CD4-positive, alpha-beta T cell (primary cell): ENCODE measurements at regions of chr17 and their contacts with region 1.

Region 1: GRCh38 chr17:43024407-43025289 is at the start of gene RND2:
- DNase-seq: peak; percentile 60 to 91 (median 71)
- ATAC-seq: peak; percentile 56
- H3K4me3 ChIP-seq: peak within 1 kb of the TSS; percentile 74
- H3K4me3 Mint-ChIP-seq: peak within 1 kb of the TSS; percentile 90
- H3K27ac ChIP-seq: peak within 1 kb of the TSS in 1 of 2 donors; percentile 56
- H3K27ac Mint-ChIP-seq: peak within 1 kb of the TSS; percentile 77
- H3K4me1 ChIP-seq: peaks cover 48% of the 10 kb centered on the region
- H3K4me1 Mint-ChIP-seq: peaks cover 28% of the 10 kb centered on the region
- H3K27me3 ChIP-seq: no peaks in the 10 kb centered on the region
- H3K27me3 Mint-ChIP-seq: no peaks in the 10 kb centered on the region
- CTCF ChIP-seq: peak; percentile 21
- total RNA-seq, gene RND2: 0.27 to 0.28 TPM

Region 2: DNA sequence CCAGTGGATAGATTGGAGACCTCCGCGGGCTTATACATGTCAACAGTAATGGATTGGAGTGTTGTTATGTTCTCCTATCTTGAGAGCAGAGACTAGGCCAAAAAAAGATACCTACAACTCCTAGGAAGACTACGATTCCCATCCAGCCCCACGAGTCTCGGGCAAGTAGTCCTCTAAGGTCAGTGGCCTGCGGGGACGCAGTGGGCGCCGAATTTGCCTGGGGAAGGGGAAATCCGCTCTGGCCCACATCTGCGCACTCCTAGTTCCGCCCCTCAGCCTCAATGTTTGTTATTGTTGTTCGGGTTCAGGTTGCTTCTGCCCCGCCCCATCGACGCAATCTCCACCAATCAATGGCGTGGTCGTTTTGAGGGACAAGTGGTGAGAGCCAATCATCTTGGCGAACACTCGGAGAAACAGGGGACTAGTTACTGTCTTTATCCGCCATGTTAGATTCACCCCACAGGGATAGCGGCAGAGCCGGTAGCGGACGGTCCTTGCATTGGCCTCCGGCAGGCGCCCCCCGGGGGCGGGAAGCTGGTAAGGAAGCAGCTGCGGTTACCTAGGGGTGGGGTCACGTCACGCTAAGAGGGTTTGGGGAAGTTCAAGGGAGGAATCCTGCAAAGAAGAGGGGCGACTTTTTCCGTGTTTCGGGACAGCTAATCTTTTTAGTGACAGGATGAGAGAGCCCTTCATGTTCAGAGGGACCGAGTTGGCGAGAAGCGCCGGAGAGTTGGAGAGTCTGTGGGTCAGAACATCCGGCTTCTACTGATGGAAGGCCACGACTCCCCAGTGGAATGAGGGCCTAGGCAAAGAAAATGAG is 146.3 kb after region 1 on chr17 and contains the start of gene NBR1:
- CTCF ChIA-PET with region 1: no interaction called
- POLR2A ChIA-PET with region 1: interaction called, 11 read pairs
- intact Hi-C with region 1: loop called in 1 of 2 experiments (anchors 5 kb)
- DNase-seq: peak; percentile 90 to 99 (median 92)
- ATAC-seq: peak; percentile 76
- H3K4me3 ChIP-seq: peak within 1 kb of the TSS; percentile 71
- H3K4me3 Mint-ChIP-seq: no peak within 1 kb of the TSS
- H3K27ac ChIP-seq: peak within 1 kb of the TSS; percentile 98
- H3K27ac Mint-ChIP-seq: no peak within 1 kb of the TSS
- H3K4me1 ChIP-seq: peaks cover 47% of the 10 kb centered on the region
- H3K4me1 Mint-ChIP-seq: peaks cover 27% of the 10 kb centered on the region
- H3K27me3 ChIP-seq: no peaks in the 10 kb centered on the region
- H3K27me3 Mint-ChIP-seq: no peaks in the 10 kb centered on the region
- CTCF ChIP-seq: no peak
- total RNA-seq, gene NBR1: 23.7 TPM

Region 3: GRCh38 chr17:43211480-43212402 is 187.1 kb after region 1 on chr17 and contains the start of gene TMEM106A:
- CTCF ChIA-PET with region 1: no interaction called
- POLR2A ChIA-PET with region 1: interaction called, 4 read pairs
- intact Hi-C with region 1: loop called in 1 of 2 experiments (anchors 5 kb)
- DNase-seq: peak; percentile 56 to 88 (median 68)
- ATAC-seq: peak; percentile 90
- H3K4me3 ChIP-seq: peak within 1 kb of the TSS; percentile 69
- H3K4me3 Mint-ChIP-seq: peak within 1 kb of the TSS; percentile 98
- H3K27ac ChIP-seq: peak within 1 kb of the TSS; percentile 72 to 77
- H3K27ac Mint-ChIP-seq: peak within 1 kb of the TSS; percentile 89
- H3K4me1 ChIP-seq: peaks cover 22% of the 10 kb centered on the region
- H3K4me1 Mint-ChIP-seq: peaks cover 38% of the 10 kb centered on the region
- H3K27me3 ChIP-seq: no peaks in the 10 kb centered on the region
- H3K27me3 Mint-ChIP-seq: no peaks in the 10 kb centered on the region
- CTCF ChIP-seq: peak; percentile 61
- total RNA-seq, gene TMEM106A: 6.3 to 6.4 TPM

Region 4: DNA sequence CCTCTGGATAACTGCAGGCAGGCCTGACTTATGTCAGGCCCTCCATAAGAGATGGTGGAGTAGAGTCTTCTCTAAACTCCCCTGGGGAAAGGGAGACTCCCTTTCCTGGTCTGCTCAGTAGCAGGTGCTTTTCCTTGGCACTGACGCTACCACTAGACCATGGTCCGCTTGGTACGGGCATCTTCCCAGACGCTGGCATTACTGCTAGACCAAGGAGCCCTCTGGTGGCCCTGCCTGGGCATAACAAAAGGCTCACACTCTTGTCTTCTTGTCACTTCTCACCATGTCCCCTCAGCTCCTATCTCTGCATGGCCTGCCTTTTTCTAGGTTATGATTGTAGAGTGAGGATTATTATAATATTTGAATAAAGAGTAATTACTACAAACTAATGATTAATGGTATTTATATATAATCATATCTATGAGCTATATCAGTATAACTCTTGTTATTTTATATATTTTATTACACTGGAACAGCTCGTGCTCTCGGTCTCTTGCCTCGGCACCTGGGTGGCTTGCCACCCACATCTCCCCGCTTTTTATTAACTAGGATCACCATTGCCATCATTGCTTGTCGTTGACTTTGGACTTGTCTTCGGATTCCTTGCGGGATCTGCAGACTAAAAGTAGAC is 314.4 kb after region 1 on chr17:
- CTCF ChIA-PET with region 1: no interaction called
- POLR2A ChIA-PET with region 1: interaction called, 3 read pairs
- intact Hi-C with region 1: loop called in 1 of 2 experiments (anchors 5 kb)
- DNase-seq: peak; percentile 48 to 75 (median 58)
- ATAC-seq: no peak
- H3K4me3 ChIP-seq: no peak overlapping the region
- H3K4me3 Mint-ChIP-seq: no peak overlapping the region
- H3K27ac ChIP-seq: no peak overlapping the region
- H3K27ac Mint-ChIP-seq: no peak overlapping the region
- H3K4me1 ChIP-seq: peaks cover 8% of the 10 kb centered on the region
- H3K4me1 Mint-ChIP-seq: peaks cover 8% of the 10 kb centered on the region
- H3K27me3 ChIP-seq: no peaks in the 10 kb centered on the region
- H3K27me3 Mint-ChIP-seq: no peaks in the 10 kb centered on the region
- CTCF ChIP-seq: peak; percentile 79

Region 5: DNA sequence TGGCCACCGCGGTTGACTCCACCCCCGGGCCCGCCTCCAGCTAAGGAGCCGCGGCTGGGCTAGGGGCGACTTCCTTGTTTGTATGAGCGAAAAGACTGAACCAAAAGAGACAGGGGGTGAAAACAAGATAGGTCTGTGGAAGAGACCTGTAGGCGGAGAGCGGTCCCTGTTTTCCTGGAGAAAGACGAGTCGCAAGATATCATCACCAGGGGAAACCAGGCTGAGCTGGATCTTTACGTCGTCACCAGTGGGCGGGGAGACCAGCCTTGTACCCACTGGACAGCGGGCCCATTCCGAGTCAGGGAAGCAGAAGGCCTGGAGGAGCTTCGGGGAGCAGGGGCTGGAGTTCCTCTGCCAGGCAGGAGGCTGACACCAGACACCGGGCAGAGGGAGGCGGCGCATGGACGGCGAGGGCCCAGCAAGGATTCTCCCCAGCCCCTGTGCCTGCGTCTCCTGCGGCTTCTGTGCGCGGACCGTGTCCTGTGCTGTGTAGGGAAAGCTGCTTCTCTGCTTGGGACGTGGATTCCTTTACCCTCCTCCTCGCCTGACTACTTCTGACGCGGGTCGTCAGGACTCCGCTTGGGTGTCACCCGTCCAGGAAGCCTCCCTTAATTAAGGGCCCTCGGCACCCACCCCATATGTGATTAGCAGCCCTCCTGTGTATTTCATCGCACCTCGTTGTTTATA is 363.9 kb after region 1 on chr17:
- CTCF ChIA-PET with region 1: no interaction called
- POLR2A ChIA-PET with region 1: interaction called, 7 read pairs
- intact Hi-C with region 1: loop called (anchors 5 kb)
- DNase-seq: peak; percentile 84 to 95 (median 90)
- ATAC-seq: peak; percentile 70
- H3K4me3 ChIP-seq: peak overlapping the region; percentile 71
- H3K4me3 Mint-ChIP-seq: peak overlapping the region; percentile 93
- H3K27ac ChIP-seq: peak overlapping the region; percentile 94 to 97
- H3K27ac Mint-ChIP-seq: peak overlapping the region; percentile 97
- H3K4me1 ChIP-seq: peaks cover 27% of the 10 kb centered on the region
- H3K4me1 Mint-ChIP-seq: peaks cover 36% of the 10 kb centered on the region
- H3K27me3 ChIP-seq: no peaks in the 10 kb centered on the region
- H3K27me3 Mint-ChIP-seq: no peaks in the 10 kb centered on the region
- CTCF ChIP-seq: no peak